BJ (cell line): ENCODE measurements at regions of chr11 and their contacts with region 1.

Region 1: GRCh38 chr11:2377511-2378443 is 667 bp downstream of the CD81 start:
- DNase-seq: no peak
- H3K4me3 ChIP-seq: peak overlapping the region; percentile 70
- H3K27me3 ChIP-seq: no peaks in the 10 kb centered on the region
- CTCF ChIP-seq: no peak

Region 2: DNA sequence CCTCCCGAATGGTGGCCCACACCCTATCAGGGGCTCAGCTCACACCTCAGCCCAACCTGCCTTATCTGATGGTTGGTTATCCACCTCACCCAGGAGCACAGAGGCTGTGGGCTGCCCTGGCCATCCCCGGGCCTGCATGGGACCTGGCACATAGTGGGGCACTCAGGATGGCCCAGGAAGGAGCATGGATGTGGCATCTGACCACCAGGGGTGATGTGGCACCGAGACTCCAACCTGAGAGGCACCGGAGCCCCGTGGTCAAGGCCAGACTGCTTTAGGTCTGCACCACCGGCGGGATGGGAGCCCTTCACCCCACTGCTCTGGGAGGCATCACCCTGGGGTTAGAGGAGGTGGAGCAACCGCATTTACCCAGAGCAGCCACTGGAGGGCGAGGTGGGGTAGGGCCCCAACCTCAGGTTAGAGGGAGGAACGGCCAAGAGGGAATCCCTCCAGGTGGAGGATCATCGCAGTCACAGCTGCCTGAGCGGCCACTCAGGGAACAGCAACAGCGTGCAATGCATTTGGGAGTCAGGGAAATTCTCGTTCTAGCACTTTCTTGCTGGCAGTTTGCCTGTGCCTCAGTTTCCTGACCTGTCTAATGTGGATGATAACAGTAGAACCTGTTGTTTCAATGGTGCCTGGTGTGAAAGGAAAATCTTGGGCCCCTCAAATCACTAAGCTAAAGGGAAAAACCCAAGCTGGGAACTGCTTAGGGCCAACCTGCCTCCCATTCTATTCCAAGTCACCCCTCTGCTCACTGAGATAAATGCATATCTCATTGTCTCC is 732.3 kb after region 1 on chr11:
- CTCF ChIA-PET with region 1: no interaction called
- POLR2A ChIA-PET with region 1: interaction called, 10 read pairs
- DNase-seq: no peak
- H3K4me3 ChIP-seq: no peak overlapping the region
- H3K27me3 ChIP-seq: no peaks in the 10 kb centered on the region
- CTCF ChIP-seq: peak; percentile 75